A673 (cell line): ENCODE measurements at regions of chr5 and their contacts with region 1.

Region 1: GRCh38 chr5:74631081-74631953 is 9.2 kb downstream of the ENC1 start:
- DNase-seq: peak; percentile 62
- H3K4me3 ChIP-seq: no peak overlapping the region
- H3K27ac ChIP-seq: peak overlapping the region; percentile 56
- H3K4me1 ChIP-seq: peaks cover 32% of the 10 kb centered on the region
- H3K27me3 ChIP-seq: no peaks in the 10 kb centered on the region
- CTCF ChIP-seq: no peak

Region 2: DNA sequence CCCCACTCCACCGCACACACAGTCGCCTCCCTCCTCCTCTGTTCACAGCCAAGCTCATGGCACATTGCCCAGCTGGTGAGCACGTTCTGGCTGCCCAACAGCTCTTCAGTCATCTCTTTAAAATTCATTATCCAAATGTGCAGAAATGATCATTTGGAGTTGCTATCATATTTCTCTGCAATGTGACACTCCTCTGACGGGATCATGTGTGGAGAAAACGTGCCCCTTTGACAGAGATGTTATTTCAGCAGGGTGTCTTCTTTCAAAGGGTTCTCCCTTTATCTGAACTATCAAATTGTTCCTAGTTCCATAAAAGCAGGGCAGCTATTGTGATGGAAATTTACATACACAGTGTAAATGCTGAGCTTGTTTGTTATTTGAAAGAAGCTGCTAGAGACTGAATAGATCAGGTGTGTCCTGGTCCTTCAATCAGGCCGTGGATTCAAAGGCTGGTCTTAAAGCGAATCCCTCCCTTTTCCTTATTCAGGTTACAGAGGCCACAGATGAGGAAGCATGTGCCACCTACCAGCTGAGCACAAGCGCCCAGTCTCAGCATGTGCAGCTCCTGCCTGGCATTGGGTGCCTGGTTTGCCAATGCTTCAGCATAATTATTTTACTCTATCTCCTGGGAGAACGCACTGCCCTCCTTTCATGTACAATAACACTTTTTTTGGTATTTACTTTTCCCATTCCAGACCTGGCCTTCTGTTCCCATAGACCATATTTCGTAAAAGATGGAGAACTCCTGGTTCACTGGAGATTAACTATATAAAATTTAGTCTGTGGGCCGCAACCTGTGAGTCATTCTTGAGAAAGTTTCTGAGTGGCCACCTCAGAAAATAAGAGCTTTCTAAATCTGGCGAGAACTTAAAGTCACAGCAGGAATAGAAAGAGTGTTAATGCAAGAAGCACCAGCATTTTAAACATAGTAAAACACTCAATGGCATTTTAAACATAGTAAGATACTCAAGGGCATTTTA is 424.5 kb before region 1 on chr5:
- CTCF ChIA-PET with region 1: no interaction called
- POLR2A ChIA-PET with region 1: no interaction called
- intact Hi-C with region 1: no loop called
- DNase-seq: peak; percentile 81
- H3K4me3 ChIP-seq: no peak overlapping the region
- H3K27ac ChIP-seq: no peak overlapping the region
- H3K4me1 ChIP-seq: peaks cover 14% of the 10 kb centered on the region
- H3K27me3 ChIP-seq: no peaks in the 10 kb centered on the region
- CTCF ChIP-seq: no peak

Region 3: DNA sequence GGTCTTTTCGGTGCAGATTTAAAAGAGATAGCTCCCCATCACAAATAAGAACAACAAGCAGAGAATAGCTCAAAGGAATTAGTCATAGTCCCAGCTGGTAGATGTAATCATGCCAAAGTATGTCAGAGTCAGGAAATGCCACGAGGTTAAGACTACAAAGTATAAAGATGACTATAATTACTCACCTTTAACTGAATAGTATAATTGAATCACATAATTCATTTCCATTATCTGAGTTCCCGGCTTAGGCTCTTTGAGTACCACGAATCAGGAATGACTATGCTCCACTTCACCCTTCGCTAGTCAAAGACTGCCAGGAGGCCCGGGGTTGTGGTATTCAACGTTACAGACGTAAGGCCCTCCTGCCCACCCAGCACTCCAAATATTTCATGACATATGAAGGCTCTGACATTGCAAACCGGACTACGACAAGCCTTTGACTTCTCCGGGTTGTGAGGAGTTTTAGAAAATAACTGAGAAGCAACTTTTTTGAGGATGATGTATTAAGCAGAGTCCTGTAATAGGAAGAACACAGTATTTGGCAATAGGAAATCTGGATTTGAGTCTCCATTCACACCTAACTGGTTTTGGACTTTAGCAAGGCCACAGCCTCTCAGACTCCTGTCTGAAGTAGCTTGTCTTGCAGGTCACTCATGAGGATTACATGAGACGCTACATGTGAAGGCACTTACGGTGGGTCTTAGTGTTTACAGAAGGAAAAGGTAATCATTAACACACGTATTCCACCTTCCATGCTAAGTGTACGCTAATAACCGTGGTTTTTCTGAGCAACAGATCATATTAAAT is 55.4 kb before region 1 on chr5:
- CTCF ChIA-PET with region 1: no interaction called
- POLR2A ChIA-PET with region 1: interaction called, 16 read pairs
- intact Hi-C with region 1: no loop called
- DNase-seq: peak; percentile 77
- H3K4me3 ChIP-seq: no peak overlapping the region
- H3K27ac ChIP-seq: no peak overlapping the region
- H3K4me1 ChIP-seq: peaks cover 10% of the 10 kb centered on the region
- H3K27me3 ChIP-seq: no peaks in the 10 kb centered on the region
- CTCF ChIP-seq: no peak